MCF 10A (cell line): ENCODE measurements at regions of chr19 and their contacts with region 1.

Region 1: DNA sequence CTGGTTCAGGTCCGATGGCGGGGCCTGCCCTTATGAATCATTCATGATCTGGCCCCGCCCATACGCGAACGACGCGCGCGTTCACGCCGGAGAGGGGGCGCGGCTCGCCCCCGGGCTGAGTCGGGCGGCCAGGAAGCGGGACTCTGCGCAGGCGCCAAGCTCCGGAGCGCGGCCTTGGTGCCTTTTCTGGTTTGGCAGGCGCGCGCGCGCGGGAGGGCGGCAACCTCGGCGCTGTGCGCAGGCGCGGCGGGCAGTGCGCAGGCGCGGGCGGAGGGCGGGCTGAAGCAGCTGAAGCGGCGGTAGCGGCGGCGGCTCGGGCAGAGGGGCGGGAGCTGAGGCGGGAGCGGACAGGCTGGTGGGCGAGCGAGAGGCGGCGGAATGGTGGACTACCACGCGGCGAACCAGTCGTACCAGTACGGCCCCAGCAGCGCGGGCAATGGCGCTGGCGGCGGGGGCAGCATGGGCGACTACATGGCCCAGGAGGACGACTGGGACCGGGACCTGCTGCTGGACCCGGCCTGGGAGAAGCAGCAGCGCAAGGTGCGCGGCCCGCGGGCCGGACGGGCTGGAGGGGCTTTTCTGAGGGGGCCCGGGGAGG is at the start of gene ACTN4:
- DNase-seq: peak; percentile 97
- H3K4me3 Mint-ChIP-seq: peak within 1 kb of the TSS; percentile 84
- H3K27ac Mint-ChIP-seq: peak within 1 kb of the TSS; percentile 86
- H3K4me1 Mint-ChIP-seq: peaks cover 14% of the 10 kb centered on the region
- H3K27me3 Mint-ChIP-seq: no peaks in the 10 kb centered on the region
- CTCF ChIP-seq: no peak
- total RNA-seq, gene ACTN4: 300 and 320 TPM in 2 replicates

Region 2: GRCh38 chr19:38544034-38544958 is 103.2 kb before region 1 on chr19:
- CTCF ChIA-PET with region 1: interaction called, 11 read pairs
- POLR2A ChIA-PET with region 1: interaction called, 34 read pairs
- intact Hi-C with region 1: no loop called
- DNase-seq: peak; percentile 93
- H3K4me3 Mint-ChIP-seq: peak overlapping the region; percentile 56
- H3K27ac Mint-ChIP-seq: no peak overlapping the region
- H3K4me1 Mint-ChIP-seq: peaks cover 12% of the 10 kb centered on the region
- H3K27me3 Mint-ChIP-seq: no peaks in the 10 kb centered on the region
- CTCF ChIP-seq: peak; percentile 66

Region 3: DNA sequence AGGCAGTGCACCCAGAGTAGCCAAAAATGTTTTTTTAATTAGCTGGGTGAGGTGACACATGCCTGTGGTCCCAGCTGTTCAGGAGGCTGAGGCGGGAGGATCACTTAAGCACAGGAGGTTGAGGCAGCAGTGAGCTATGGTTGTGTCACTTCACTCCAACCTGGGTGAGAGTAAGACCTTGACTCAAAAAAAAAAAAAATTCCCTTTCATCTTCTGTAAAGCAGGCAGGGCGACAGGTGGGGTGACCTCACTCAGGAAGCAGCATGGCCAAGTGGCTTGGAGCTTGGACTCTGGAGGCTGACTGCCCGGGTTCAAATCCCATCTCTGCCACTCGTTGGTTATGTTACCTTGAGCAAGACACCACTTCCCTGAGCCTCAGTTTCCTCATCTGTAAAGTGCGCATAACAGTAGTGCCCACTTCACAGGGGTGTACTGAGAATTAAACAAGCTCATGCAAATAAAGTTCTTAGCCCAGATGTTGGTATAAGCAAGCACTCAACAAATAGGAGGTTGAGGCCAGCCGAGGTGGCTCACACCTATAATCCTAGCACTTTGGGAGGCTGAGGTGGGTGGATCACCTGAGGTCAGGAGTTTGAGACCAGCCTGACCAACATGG is 78.0 kb before region 1 on chr19:
- CTCF ChIA-PET with region 1: no interaction called
- POLR2A ChIA-PET with region 1: no interaction called
- intact Hi-C with region 1: no loop called
- DNase-seq: no peak
- H3K4me3 Mint-ChIP-seq: no peak overlapping the region
- H3K27ac Mint-ChIP-seq: no peak overlapping the region
- H3K4me1 Mint-ChIP-seq: no peaks in the 10 kb centered on the region
- H3K27me3 Mint-ChIP-seq: no peaks in the 10 kb centered on the region
- CTCF ChIP-seq: no peak

Region 4: DNA sequence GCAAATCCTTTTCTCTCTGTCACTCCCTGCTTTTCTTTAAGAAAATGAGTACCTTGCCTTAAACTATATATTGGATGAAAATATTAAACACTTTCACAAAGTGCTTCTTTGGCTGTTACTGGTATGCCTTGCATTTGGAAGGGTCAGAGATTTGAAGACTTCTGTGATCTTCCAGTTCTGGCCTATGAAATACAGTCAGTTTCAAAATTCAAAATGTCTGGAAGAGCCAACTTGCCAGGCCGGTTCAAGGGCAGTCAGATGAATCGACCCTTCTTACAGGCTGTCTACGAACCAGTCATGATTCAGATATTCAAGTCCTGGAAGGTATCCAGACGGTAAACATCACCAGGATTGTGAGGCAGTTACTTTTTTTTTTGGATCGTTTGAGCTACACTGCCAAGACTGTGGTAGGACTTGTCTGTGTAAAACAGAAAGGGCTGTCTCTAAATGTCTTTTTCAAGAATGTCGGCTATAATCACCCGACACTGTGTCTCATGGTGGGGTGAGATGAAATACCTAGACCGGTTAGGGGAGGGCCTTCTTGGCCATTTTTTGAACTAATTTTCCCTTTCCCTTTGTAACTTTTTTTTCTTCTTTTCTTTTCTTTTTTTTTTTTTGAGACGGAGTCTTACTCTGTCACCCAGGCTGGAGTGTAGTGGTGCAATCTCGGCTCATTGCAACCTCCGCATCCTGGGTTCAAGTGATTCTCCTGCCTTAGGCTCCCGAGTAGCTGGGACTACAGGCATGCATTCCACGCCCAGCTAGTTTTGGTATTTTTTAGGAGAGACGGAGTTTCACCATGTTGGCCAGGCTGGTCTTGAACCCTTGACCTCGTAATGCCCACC is 11.2 kb after region 1 on chr19:
- CTCF ChIA-PET with region 1: interaction called, 4 read pairs
- POLR2A ChIA-PET with region 1: interaction called, 185 read pairs
- intact Hi-C with region 1: loop called (anchors 1 kb)
- DNase-seq: peak; percentile 99
- H3K4me3 Mint-ChIP-seq: peak overlapping the region; percentile 61
- H3K27ac Mint-ChIP-seq: peak overlapping the region; percentile 100
- H3K4me1 Mint-ChIP-seq: peaks cover 46% of the 10 kb centered on the region
- H3K27me3 Mint-ChIP-seq: no peaks in the 10 kb centered on the region
- CTCF ChIP-seq: no peak

Region 5: GRCh38 chr19:38711726-38712153 is 64.3 kb after region 1 on chr19:
- CTCF ChIA-PET with region 1: no interaction called
- POLR2A ChIA-PET with region 1: interaction called, 38 read pairs
- intact Hi-C with region 1: no loop called
- DNase-seq: no peak
- H3K4me3 Mint-ChIP-seq: no peak overlapping the region
- H3K27ac Mint-ChIP-seq: no peak overlapping the region
- H3K4me1 Mint-ChIP-seq: peaks cover 11% of the 10 kb centered on the region
- H3K27me3 Mint-ChIP-seq: no peaks in the 10 kb centered on the region
- CTCF ChIP-seq: no peak

Region 6: GRCh38 chr19:38838573-38839269 is 191.3 kb after region 1 on chr19:
- CTCF ChIA-PET with region 1: interaction called, 3 read pairs
- POLR2A ChIA-PET with region 1: interaction called, 74 read pairs
- intact Hi-C with region 1: no loop called
- DNase-seq: peak; percentile 92
- H3K4me3 Mint-ChIP-seq: peak overlapping the region; percentile 51
- H3K27ac Mint-ChIP-seq: peak overlapping the region; percentile 85
- H3K4me1 Mint-ChIP-seq: peaks cover 21% of the 10 kb centered on the region
- H3K27me3 Mint-ChIP-seq: no peaks in the 10 kb centered on the region
- CTCF ChIP-seq: peak; percentile 37

Region 7: GRCh38 chr19:38929929-38930775 is 282.7 kb after region 1 on chr19 and contains the start of gene SARS2:
- CTCF ChIA-PET with region 1: interaction called, 4 read pairs
- POLR2A ChIA-PET with region 1: interaction called, 26 read pairs
- intact Hi-C with region 1: no loop called
- DNase-seq: peak; percentile 93
- H3K4me3 Mint-ChIP-seq: peak within 1 kb of the TSS; percentile 85
- H3K27ac Mint-ChIP-seq: peak within 1 kb of the TSS; percentile 95
- H3K4me1 Mint-ChIP-seq: peaks cover 14% of the 10 kb centered on the region
- H3K27me3 Mint-ChIP-seq: no peaks in the 10 kb centered on the region
- CTCF ChIP-seq: peak; percentile 95
- total RNA-seq, gene SARS2: 9.3 and 23.6 TPM in 2 replicates

Region 8: GRCh38 chr19:39098365-39099269 is 451.1 kb after region 1 on chr19:
- CTCF ChIA-PET with region 1: no interaction called
- POLR2A ChIA-PET with region 1: no interaction called
- intact Hi-C with region 1: no loop called
- DNase-seq: no peak
- H3K4me3 Mint-ChIP-seq: no peak overlapping the region
- H3K27ac Mint-ChIP-seq: no peak overlapping the region
- H3K4me1 Mint-ChIP-seq: peaks cover 4% of the 10 kb centered on the region
- H3K27me3 Mint-ChIP-seq: peaks cover 5% of the 10 kb centered on the region
- CTCF ChIP-seq: no peak